PC-9 (cell line): ENCODE measurements at regions of chr21 and their contacts with region 1.

Region 1: GRCh38 chr21:41133896-41134522 is 34.0 kb upstream of the BACE2 start:
- DNase-seq: no peak
- H3K4me3 ChIP-seq: no peak overlapping the region
- H3K27ac ChIP-seq: no peak overlapping the region
- H3K4me1 ChIP-seq: no peaks in the 10 kb centered on the region
- H3K27me3 ChIP-seq: no peaks in the 10 kb centered on the region
- CTCF ChIP-seq: peak; percentile 63

Region 2: GRCh38 chr21:39961251-39961650 is 1172.8 kb before region 1 on chr21:
- CTCF ChIA-PET with region 1: no interaction called
- POLR2A ChIA-PET with region 1: interaction called, 10 read pairs
- intact Hi-C with region 1: no loop called
- DNase-seq: no peak
- H3K4me3 ChIP-seq: no peak overlapping the region
- H3K27ac ChIP-seq: no peak overlapping the region
- H3K4me1 ChIP-seq: no peaks in the 10 kb centered on the region
- H3K27me3 ChIP-seq: no peaks in the 10 kb centered on the region
- CTCF ChIP-seq: no peak